A549 (cell line): ENCODE measurements at regions of chr2 and their contacts with region 1.

Region 1: GRCh38 chr2:70301344-70302194 is at the start of gene FAM136A:
- DNase-seq: peak; percentile 78 to 89
- ATAC-seq: peak; percentile 86 to 94
- H3K4me3 ChIP-seq: peak within 1 kb of the TSS; percentile 95
- H3K27ac ChIP-seq: peak within 1 kb of the TSS; percentile 95 to 96
- H3K4me1 ChIP-seq: peaks cover 6% of the 10 kb centered on the region
- CTCF ChIP-seq: peak; percentile 75
- EP300 ChIP-seq: no peak
- POLR2A ChIP-seq: peak; percentile 96
- RAD21 ChIP-seq: peak; percentile 47 to 55; a peak in 4 of 5 replicates
- polyA plus RNA-seq, gene FAM136A: 88.5 and 117 TPM in 2 replicates

Region 2: DNA sequence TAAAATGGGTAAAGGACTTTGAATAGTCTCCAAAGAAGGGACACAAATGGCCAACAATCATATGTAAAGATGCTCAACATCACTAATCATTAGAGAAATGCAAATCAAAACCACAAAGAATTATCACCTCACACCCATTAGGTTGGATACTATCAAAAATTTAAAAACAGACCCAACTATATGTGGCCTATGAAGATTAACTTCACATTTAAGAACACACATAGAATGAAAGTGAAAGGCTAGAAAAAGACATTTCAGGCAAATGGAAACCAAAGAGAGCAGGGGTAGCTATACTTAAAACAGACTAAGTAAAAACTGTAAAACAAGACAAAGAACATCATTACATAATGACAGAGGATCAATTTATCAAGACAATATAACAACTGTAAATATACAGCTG is 286.6 kb before region 1 on chr2:
- CTCF ChIA-PET with region 1: no interaction called
- POLR2A ChIA-PET with region 1: no interaction called
- DNase-seq: no peak
- ATAC-seq: no peak
- H3K4me3 ChIP-seq: no peak overlapping the region
- H3K27ac ChIP-seq: no peak overlapping the region
- H3K4me1 ChIP-seq: no peaks in the 10 kb centered on the region
- CTCF ChIP-seq: no peak
- EP300 ChIP-seq: no peak
- POLR2A ChIP-seq: no peak
- RAD21 ChIP-seq: no peak

Region 3: DNA sequence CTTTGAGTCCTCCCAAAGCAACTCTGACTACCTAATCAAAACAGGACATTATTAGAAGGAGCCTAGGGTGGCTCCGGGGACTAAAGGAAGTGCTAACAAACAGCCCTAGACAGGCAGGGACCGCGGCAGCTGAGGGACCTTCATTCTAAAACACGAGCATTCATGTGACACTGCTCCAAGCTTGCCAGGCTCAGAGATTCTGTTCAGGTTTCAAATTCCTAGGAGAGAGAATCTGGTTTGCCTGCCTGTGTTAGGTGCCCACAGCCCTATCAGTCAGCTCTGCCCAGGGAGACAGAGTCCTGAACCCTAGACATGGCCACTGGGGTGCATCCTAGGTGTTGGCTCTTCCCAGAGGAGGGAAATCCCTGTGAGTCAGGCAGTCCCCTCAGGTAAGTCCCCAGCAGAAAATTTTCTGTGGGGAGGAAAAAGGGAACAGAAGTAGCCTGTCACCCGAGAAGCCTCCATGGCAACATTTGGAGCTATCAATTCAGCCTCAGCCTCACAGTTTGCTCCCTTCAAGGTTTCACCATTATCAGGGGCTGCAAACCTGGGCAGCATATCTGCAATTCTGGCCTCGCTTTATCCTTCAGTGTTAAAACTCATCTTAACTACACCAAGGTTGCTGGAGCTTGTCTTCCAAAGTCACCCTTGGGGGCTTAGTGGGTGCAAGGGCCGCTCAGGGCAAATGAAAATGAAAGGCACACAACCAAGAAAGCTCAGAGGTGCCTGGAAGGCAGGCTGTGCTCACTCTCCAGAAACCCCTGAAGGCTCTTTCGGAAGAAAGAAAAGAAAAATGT is 185.7 kb before region 1 on chr2:
- CTCF ChIA-PET with region 1: no interaction called
- POLR2A ChIA-PET with region 1: no interaction called
- DNase-seq: no peak
- ATAC-seq: peak in 1 of 2 experiments; percentile 18; a peak in 1 of 6 replicates
- H3K4me3 ChIP-seq: no peak overlapping the region
- H3K27ac ChIP-seq: no peak overlapping the region
- H3K4me1 ChIP-seq: peaks cover 22% of the 10 kb centered on the region
- CTCF ChIP-seq: no peak
- EP300 ChIP-seq: no peak
- POLR2A ChIP-seq: no peak
- RAD21 ChIP-seq: no peak

Region 4: DNA sequence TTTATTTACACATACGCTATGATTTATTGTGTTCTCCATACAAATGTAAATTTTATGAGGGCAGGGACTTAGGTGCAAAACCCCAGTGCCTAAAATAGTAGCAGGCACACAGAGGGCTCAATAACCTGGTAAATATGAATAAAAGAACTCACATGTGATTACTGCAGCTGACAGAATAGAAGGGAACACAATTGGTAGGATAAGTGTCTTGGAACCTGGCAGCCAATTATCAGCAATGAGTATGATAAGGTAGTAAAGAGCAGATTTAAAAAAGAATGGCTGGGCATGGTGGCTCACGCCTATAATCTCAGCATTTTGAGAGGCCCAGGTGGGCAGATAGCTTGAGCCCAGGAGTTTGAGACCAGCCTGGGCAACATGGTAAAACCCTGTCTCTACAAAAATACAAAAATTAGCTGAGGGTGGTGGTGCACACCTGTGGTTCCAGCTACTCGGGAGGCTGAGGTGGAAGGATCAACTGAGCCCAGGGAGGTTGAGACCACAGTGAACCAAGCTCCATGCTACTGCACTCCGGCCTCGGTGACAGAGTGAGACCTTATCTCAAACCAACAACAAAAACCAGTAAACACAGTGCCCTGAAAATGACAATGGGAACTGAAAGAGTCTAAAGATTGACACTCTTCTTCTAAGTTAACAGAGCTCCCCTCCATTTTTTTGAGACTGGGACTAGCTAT is 17.9 kb before region 1 on chr2:
- CTCF ChIA-PET with region 1: interaction called, 11 read pairs
- POLR2A ChIA-PET with region 1: no interaction called
- DNase-seq: no peak
- ATAC-seq: no peak
- H3K4me3 ChIP-seq: no peak overlapping the region
- H3K27ac ChIP-seq: no peak overlapping the region
- H3K4me1 ChIP-seq: no peaks in the 10 kb centered on the region
- CTCF ChIP-seq: no peak
- EP300 ChIP-seq: no peak
- POLR2A ChIP-seq: no peak
- RAD21 ChIP-seq: no peak

Region 5: GRCh38 chr2:70340921-70341765 is 39.6 kb after region 1 on chr2:
- CTCF ChIA-PET with region 1: interaction called, 53 read pairs
- POLR2A ChIA-PET with region 1: no interaction called
- DNase-seq: peak; percentile 60 to 91
- ATAC-seq: peak; percentile 66 to 88; a peak in 5 of 6 replicates
- H3K4me3 ChIP-seq: no peak overlapping the region
- H3K27ac ChIP-seq: no peak overlapping the region
- H3K4me1 ChIP-seq: peaks cover 9% of the 10 kb centered on the region; the same call in 1 of the 3 replicates
- CTCF ChIP-seq: peak; percentile 98
- EP300 ChIP-seq: no peak
- POLR2A ChIP-seq: no peak
- RAD21 ChIP-seq: peak; percentile 97 to 98

Region 6: GRCh38 chr2:70641263-70641784 is 339.8 kb after region 1 on chr2:
- CTCF ChIA-PET with region 1: interaction called, 322 read pairs
- POLR2A ChIA-PET with region 1: interaction called, 4 read pairs
- DNase-seq: no peak
- ATAC-seq: no peak
- H3K4me3 ChIP-seq: no peak overlapping the region
- H3K27ac ChIP-seq: no peak overlapping the region
- H3K4me1 ChIP-seq: no peaks in the 10 kb centered on the region
- CTCF ChIP-seq: no peak
- EP300 ChIP-seq: no peak
- POLR2A ChIP-seq: no peak
- RAD21 ChIP-seq: no peak

Region 7: GRCh38 chr2:70671092-70671675 is 369.6 kb after region 1 on chr2:
- CTCF ChIA-PET with region 1: interaction called, 13 read pairs
- POLR2A ChIA-PET with region 1: no interaction called
- DNase-seq: no peak
- ATAC-seq: peak in 1 of 2 experiments; percentile 52; a peak in 3 of 6 replicates
- H3K4me3 ChIP-seq: no peak overlapping the region
- H3K27ac ChIP-seq: no peak overlapping the region
- H3K4me1 ChIP-seq: 0 out of 3 replicates have a peak, but pooled peaks cover 5% of the 10 kb centered on the region
- CTCF ChIP-seq: no peak
- EP300 ChIP-seq: no peak
- POLR2A ChIP-seq: no peak
- RAD21 ChIP-seq: no peak

Region 8: DNA sequence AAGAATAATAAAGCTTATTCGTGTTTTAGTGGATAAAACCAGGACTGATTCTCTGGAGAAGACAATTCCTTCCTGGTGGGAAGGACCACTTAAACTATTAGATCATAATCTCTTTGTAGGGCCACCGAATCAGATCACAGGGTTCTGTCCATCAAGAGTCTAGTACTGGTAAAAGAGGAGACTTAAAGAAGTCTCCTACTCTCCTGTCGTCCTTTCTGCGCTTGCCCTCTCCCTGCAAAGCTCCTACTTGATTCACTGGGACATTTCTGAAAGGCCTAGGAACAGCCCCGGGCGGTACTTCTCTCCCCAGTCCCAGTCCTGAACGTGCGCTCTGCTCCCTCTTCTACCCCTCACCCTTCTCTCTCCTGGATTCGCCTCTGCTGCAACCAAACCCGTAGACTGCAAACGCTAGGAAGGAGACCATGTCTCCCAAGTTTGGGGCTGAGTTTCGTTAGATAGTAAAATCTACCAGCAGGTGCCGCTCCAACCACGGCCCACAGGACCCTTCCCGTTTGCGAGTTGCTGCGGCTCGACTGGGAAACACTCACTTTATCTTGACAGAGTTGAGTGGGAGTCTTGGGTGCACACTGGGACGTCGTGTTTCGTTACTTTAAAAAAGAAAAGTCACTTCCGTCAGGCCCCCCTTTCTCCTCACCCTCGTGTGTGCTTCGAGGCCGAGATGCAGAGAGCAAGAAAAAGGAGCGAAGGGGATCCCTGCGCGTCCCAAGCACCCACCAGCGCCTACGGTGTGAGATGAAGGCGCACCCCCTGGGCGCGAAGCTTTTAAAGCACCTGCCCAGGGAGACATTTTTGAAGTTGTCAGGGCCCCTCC is 488.0 kb after region 1 on chr2:
- CTCF ChIA-PET with region 1: interaction called, 21 read pairs
- POLR2A ChIA-PET with region 1: interaction called, 3 read pairs
- DNase-seq: peak; percentile 78 to 85
- ATAC-seq: peak; percentile 86 to 96
- H3K4me3 ChIP-seq: peak overlapping the region; percentile 45
- H3K27ac ChIP-seq: 0 out of 6 replicates have a peak overlapping the region, but pooled peaks of 1 of the 2 experiments have one; percentile 11
- H3K4me1 ChIP-seq: peaks cover 7% of the 10 kb centered on the region; the same call in 1 of the 3 replicates
- CTCF ChIP-seq: peak; percentile 98
- EP300 ChIP-seq: no peak
- POLR2A ChIP-seq: no peak
- RAD21 ChIP-seq: peak; percentile 90 to 94